ENCODE measurements at regions of chr7 and their contacts with region 1.

Region 1: DNA sequence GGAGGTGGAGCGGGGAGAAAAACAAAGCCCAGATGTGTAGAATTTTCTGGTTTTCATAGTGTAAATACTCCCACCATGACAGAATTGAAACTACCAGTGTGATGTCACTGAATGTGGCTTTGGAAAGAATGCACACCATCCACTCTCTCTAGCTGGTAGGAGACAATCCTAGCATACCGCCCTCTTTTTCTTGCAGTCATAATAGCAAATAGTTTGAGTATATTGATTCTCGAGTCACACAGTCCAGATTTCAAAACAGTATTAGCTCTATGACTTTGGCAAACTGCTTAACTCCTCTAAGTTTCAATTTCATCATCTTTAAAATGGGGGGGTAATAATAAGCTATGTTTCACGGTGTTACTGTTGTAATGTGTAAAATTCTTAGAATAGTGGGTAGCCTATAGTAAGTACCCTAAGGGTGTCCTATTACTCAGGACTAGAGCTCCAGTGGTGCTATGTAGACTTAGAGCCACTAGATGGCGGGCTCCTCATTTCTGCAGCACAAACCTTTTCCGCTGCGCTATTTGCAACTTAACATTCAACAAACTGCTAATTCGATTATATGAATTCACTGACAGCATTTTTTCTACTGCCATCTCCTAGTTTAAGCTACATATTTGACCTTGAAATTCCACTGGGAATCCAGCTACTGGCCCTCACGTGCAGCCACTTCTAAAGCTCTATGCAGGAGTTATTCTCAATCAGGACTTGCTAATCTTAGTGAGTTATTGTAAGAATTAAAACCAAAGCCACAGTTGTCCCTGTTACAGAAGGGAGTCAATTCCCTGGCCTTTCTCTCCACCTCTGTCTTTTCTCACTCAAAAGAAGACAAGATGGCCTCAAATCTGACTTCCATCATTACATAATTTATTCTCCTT is 18.7 kb downstream of the TAS2R40 start:
- DNase-seq: peak; percentile 82
- H3K4me3 Mint-ChIP-seq: peak overlapping the region; percentile 7
- H3K27ac Mint-ChIP-seq: peak overlapping the region; percentile 39
- H3K4me1 Mint-ChIP-seq: peaks cover 21% of the 10 kb centered on the region
- H3K27me3 Mint-ChIP-seq: peaks cover 21% of the 10 kb centered on the region
- CTCF ChIP-seq: peak; percentile 92

Region 2: DNA sequence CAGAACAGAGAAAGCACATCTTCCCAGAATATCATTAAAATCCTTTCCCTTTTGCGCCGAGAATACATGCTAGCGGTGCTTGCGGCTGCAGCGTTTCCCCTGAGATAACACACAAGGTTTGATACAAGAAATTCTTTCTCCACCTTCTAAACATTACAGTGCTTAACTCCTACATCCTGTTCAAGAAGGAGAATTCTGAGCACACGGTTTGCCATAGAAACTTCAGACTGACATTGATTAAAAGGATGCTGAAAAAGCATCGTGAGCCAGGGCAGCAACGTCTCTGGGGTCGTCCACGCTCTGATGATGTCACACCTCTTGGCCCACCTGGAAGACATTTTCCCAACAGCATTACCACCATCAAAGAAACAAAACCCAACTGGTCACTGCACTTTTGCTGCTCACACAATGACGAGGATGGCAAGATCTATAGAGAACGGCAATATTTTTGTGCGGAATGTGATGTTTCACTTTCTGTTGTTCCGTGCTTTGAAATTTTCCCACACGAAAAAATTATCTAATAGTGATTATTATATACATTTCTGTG is 518.2 kb before region 1 on chr7:
- CTCF ChIA-PET with region 1: no interaction called
- POLR2A ChIA-PET with region 1: no interaction called
- intact Hi-C with region 1: no loop called
- DNase-seq: no peak
- H3K4me3 Mint-ChIP-seq: no peak overlapping the region
- H3K27ac Mint-ChIP-seq: no peak overlapping the region
- H3K4me1 Mint-ChIP-seq: no peaks in the 10 kb centered on the region
- H3K27me3 Mint-ChIP-seq: peaks cover 85% of the 10 kb centered on the region
- CTCF ChIP-seq: no peak

Region 3: DNA sequence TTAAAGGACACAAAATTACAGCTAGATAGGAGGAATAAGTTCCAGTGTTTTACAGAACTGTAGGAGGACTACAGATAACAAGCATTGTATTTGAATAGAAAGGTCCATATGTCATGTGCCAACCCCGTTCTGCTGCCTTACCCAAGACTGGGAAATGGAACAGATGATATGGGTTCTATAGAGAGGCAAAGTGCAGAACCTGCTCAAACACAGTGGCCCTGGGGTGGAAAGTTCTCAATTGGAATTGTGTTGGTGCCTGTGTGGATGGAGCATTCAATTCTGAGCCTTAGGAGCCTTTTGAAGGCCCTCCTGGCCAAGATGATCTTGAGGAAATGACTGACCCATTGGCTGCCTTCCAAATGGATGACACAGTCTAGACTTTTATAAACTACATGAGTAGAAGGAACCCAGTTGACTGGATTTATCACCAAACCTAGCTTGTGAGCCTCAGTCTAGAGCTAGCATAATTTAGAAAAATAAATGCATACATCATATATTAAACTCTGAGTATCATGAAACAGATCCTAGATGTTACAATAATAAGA is 495.4 kb before region 1 on chr7:
- CTCF ChIA-PET with region 1: no interaction called
- POLR2A ChIA-PET with region 1: no interaction called
- intact Hi-C with region 1: no loop called
- DNase-seq: peak; percentile 45
- H3K4me3 Mint-ChIP-seq: no peak overlapping the region
- H3K27ac Mint-ChIP-seq: no peak overlapping the region
- H3K4me1 Mint-ChIP-seq: no peaks in the 10 kb centered on the region
- H3K27me3 Mint-ChIP-seq: peaks cover 72% of the 10 kb centered on the region
- CTCF ChIP-seq: no peak

Region 4: DNA sequence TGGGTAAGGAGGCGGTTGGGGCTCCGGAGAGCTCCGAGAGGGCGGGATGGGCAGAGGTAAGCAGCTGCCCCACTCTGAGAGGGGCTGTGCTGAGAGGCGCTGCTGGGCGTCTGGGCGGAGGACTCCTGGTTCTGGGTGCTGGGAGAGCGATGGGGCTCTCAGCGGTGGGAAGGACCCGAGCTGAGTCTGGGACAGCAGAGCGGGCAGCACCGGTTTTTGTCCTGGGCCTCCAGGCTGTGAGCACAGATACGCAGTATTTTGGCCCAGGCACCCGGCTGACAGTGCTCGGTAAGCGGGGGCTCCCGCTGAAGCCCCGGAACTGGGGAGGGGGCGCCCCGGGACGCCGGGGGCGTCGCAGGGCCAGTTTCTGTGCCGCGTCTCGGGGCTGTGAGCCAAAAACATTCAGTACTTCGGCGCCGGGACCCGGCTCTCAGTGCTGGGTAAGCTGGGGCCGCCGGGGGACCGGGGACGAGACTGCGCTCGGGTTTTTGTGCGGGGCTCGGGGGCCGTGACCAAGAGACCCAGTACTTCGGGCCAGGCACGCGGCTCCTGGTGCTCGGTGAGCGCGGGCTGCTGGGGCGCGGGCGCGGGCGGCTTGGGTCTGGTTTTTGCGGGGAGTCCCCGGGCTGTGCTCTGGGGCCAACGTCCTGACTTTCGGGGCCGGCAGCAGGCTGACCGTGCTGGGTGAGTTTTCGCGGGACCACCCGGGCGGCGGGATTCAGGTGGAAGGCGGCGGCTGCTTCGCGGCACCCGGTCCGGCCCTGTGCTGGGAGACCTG is 443.7 kb before region 1 on chr7:
- CTCF ChIA-PET with region 1: no interaction called
- POLR2A ChIA-PET with region 1: no interaction called
- intact Hi-C with region 1: no loop called
- DNase-seq: no peak
- H3K4me3 Mint-ChIP-seq: no peak overlapping the region
- H3K27ac Mint-ChIP-seq: no peak overlapping the region
- H3K4me1 Mint-ChIP-seq: peaks cover 11% of the 10 kb centered on the region
- H3K27me3 Mint-ChIP-seq: peaks cover 77% of the 10 kb centered on the region
- CTCF ChIP-seq: no peak

Region 5: DNA sequence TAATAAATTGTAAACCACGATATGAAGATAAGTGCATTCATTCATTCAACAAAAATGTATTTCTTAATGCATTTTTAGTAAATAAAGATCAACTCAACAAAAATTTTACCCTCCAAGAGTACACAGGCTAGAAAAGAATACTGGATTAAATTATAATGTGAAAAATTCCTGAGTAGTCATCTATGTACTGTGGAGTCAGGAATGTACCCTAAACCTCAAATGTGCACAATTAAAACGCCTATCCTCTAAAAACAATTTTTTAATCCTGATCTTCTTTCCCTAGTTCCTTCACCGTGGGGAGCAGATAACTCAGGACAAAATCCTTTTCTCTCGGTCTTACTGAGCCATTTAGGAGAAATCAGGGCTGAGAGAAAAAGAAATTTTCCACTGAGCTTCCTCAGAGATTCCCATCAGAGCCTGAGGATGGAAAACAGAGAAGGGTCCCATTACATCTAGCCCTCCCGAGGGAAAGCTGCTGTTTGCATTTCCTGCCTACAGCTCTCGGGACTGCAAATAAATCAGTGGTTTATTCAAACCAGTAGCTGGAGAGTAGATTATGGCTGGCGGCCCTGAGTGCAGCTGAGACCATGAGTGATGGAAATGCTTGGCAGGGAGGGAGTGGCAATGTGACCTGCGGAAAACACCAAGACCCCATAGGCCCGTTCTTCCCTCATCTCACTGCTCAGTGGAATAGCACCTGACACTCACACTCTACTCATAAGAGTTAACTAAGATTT is 11.3 kb before region 1 on chr7:
- CTCF ChIA-PET with region 1: interaction called, 20 read pairs
- POLR2A ChIA-PET with region 1: no interaction called
- intact Hi-C with region 1: no loop called
- DNase-seq: no peak
- H3K4me3 Mint-ChIP-seq: no peak overlapping the region
- H3K27ac Mint-ChIP-seq: no peak overlapping the region
- H3K4me1 Mint-ChIP-seq: no peaks in the 10 kb centered on the region
- H3K27me3 Mint-ChIP-seq: peaks cover 24% of the 10 kb centered on the region
- CTCF ChIP-seq: no peak

Region 6: GRCh38 chr7:143299840-143300239 is 59.3 kb after region 1 on chr7:
- CTCF ChIA-PET with region 1: interaction called, 30 read pairs
- POLR2A ChIA-PET with region 1: interaction called, 4 read pairs
- intact Hi-C with region 1: loop called (anchors 1 kb)
- DNase-seq: peak; percentile 45
- H3K4me3 Mint-ChIP-seq: no peak overlapping the region
- H3K27ac Mint-ChIP-seq: no peak overlapping the region
- H3K4me1 Mint-ChIP-seq: peaks cover 13% of the 10 kb centered on the region
- H3K27me3 Mint-ChIP-seq: no peaks in the 10 kb centered on the region
- CTCF ChIP-seq: peak; percentile 43

Region 7: GRCh38 chr7:143331179-143331820 is 90.8 kb after region 1 on chr7:
- CTCF ChIA-PET with region 1: interaction called, 14 read pairs
- POLR2A ChIA-PET with region 1: no interaction called
- intact Hi-C with region 1: no loop called
- DNase-seq: peak; percentile 92
- H3K4me3 Mint-ChIP-seq: no peak overlapping the region
- H3K27ac Mint-ChIP-seq: peak overlapping the region; percentile 88
- H3K4me1 Mint-ChIP-seq: peaks cover 12% of the 10 kb centered on the region
- H3K27me3 Mint-ChIP-seq: no peaks in the 10 kb centered on the region
- CTCF ChIP-seq: no peak

Region 8: DNA sequence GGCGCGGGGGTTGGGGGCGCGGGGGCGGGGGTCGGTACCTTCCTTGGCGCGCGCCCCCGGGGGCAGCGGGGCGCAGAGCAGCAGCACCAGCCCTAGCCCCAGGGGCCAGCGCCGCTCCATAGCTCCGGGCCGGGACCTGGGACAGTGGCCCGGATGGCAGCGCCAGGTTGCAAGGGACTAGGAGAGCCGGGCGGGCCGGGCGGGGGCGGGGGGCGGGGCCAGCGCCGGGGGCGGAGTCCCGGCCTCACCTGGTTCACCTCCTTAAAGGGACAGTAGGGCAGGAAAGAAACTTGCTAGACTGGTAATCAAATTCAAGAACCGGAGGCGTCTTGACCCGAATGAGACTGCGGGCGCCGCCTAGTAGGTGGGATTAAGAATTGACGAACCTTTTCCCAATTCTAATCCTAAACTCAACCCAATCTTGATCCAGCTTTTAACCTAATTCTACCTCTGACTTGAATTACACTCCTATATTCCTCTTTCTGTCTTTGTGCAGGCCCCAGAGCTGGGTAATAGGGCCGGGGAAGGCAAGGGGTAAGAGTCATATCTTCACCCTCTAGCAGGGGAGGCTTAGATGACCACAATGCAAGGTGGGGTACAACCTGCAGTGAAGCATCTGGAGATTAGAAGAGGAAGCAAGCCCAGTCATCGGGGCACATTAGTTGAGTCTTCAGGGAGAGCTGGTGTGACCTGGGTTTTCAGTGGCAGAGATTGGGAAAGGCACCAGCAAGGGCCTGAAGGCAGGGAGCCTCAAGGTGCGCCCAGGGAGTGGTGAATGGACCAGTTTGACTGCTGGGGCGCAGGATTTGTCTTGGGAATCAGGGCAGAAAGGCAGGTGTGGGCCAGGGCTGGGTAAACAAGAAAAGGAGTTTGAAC is 168.4 kb after region 1 on chr7 and contains the start of gene EPHA1:
- CTCF ChIA-PET with region 1: interaction called, 131 read pairs
- POLR2A ChIA-PET with region 1: interaction called, 3 read pairs
- intact Hi-C with region 1: no loop called
- DNase-seq: peak; percentile 86
- H3K4me3 Mint-ChIP-seq: peak within 1 kb of the TSS; percentile 72
- H3K27ac Mint-ChIP-seq: peak within 1 kb of the TSS; percentile 63
- H3K4me1 Mint-ChIP-seq: peaks cover 13% of the 10 kb centered on the region
- H3K27me3 Mint-ChIP-seq: no peaks in the 10 kb centered on the region
- CTCF ChIP-seq: peak; percentile 35
- total RNA-seq, gene EPHA1: 0.89 and 1.2 TPM in 2 replicates

Region 9: GRCh38 chr7:143499743-143500348 is 259.3 kb after region 1 on chr7:
- CTCF ChIA-PET with region 1: interaction called, 11 read pairs
- POLR2A ChIA-PET with region 1: no interaction called
- intact Hi-C with region 1: no loop called
- DNase-seq: no peak
- H3K4me3 Mint-ChIP-seq: no peak overlapping the region
- H3K27ac Mint-ChIP-seq: no peak overlapping the region
- H3K4me1 Mint-ChIP-seq: no peaks in the 10 kb centered on the region
- H3K27me3 Mint-ChIP-seq: no peaks in the 10 kb centered on the region
- CTCF ChIP-seq: no peak

Measured in MCF 10A (cell line).